Calu3 (cell line): ENCODE measurements at regions of chr19 and their contacts with region 1.

Region 1: GRCh38 chr19:48445606-48446481 is at the start of gene GRWD1:
- DNase-seq: peak; percentile 92
- H3K4me3 Mint-ChIP-seq: peak within 1 kb of the TSS; percentile 99
- H3K27ac Mint-ChIP-seq: peak within 1 kb of the TSS; percentile 97
- H3K4me1 Mint-ChIP-seq: peaks cover 16% of the 10 kb centered on the region
- H3K27me3 Mint-ChIP-seq: peaks cover 38% of the 10 kb centered on the region
- CTCF ChIP-seq: peak; percentile 6
- total RNA-seq, gene GRWD1: 75.0 and 76.7 TPM in 2 replicates

Region 2: DNA sequence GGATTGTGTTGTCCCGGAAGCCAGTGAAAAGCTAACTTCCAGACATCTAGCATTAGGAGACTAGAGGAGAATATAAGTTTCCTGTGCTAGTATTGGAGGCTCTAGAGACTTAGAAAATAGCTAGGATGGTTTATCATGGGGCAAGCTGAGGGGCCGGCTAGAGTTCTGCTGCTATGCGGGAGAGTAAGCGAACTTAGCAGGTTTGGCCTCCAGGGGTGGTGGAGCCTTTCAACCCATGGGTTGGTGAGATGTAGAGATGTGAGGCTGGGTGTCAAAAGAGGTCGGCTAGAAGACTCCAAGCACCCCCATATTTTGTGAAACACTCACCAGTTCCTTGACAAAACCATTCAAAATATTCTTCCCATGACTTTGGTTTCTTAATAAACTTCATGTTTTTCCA is 564.1 kb before region 1 on chr19:
- CTCF ChIA-PET with region 1: no interaction called
- intact Hi-C with region 1: no loop called
- DNase-seq: no peak
- H3K4me3 Mint-ChIP-seq: no peak overlapping the region
- H3K27ac Mint-ChIP-seq: no peak overlapping the region
- H3K4me1 Mint-ChIP-seq: peaks cover 11% of the 10 kb centered on the region
- H3K27me3 Mint-ChIP-seq: peaks cover 78% of the 10 kb centered on the region
- CTCF ChIP-seq: no peak

Region 3: DNA sequence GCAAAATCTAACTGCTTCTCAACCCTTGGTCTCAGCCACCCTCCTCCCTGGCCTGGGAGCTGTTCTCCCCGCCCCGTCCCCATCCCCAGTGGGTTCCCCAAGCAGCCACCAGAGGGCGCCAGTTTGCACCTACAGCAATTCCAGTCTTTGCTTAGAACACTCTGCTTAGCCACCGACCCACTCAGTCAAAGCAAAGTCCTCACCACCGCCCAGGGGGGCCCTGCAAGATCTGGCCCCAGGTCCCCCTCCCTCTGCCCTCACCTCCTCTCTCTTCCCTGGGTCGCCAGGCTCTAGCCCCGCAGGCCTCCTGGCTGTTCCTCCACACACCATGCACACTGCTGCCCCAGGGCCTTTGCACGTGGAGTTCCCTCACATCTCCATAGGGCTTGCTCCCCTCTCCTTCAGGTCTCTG is 94.5 kb before region 1 on chr19:
- CTCF ChIA-PET with region 1: no interaction called
- intact Hi-C with region 1: no loop called
- DNase-seq: peak; percentile 80
- H3K4me3 Mint-ChIP-seq: no peak overlapping the region
- H3K27ac Mint-ChIP-seq: no peak overlapping the region
- H3K4me1 Mint-ChIP-seq: peaks cover 15% of the 10 kb centered on the region
- H3K27me3 Mint-ChIP-seq: no peaks in the 10 kb centered on the region
- CTCF ChIP-seq: peak; percentile 76

Region 4: DNA sequence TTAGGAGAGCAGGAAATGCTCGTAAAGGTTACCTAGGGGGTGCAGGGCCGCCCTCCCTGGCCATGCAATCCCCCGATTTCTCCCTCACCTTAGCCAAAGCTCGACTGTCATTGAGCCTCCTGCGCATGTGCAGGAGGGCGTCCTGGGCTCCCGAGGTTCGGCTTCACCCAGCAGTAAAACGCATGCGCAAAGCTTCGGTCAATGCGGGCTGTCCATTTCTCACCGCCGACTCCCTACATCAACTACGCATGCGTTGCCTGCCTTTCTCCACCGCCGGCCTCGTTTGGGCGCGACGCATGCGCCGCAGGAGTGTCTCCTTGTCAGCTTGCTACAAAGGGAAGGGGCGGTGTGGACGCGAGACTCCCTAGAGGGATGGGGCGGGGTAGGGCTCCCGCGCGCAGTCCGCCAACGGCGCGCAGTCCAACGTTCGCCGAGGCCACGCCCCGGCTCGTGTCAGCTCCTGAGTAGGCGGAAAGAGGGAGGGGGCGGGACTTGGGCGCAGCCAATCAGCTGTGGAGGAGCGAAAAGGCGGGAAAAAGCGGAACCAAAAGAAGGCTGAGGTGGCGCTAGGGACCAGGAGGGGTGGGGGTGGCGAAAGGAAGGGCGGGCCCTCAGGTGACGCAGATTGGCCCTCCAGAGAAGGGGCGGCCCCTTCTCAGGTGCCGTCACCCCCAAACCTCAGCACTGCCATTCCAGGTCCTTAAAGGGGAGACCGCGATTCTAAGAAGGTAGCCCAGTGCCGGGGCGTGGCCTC is 81.9 kb before region 1 on chr19 and contains the starts of genes SYNGR4 and TMEM143:
- CTCF ChIA-PET with region 1: interaction called, 10 read pairs
- intact Hi-C with region 1: no loop called
- DNase-seq: peak; percentile 99
- H3K4me3 Mint-ChIP-seq: peak within 1 kb of the TSS; percentile 84
- H3K27ac Mint-ChIP-seq: peak within 1 kb of the TSS; percentile 97
- H3K4me1 Mint-ChIP-seq: no peaks in the 10 kb centered on the region
- H3K27me3 Mint-ChIP-seq: no peaks in the 10 kb centered on the region
- CTCF ChIP-seq: no peak
- total RNA-seq, gene SYNGR4: not detected in 2 replicates
- total RNA-seq, gene TMEM143: 10.4 and 14.8 TPM in 2 replicates

Region 5: DNA sequence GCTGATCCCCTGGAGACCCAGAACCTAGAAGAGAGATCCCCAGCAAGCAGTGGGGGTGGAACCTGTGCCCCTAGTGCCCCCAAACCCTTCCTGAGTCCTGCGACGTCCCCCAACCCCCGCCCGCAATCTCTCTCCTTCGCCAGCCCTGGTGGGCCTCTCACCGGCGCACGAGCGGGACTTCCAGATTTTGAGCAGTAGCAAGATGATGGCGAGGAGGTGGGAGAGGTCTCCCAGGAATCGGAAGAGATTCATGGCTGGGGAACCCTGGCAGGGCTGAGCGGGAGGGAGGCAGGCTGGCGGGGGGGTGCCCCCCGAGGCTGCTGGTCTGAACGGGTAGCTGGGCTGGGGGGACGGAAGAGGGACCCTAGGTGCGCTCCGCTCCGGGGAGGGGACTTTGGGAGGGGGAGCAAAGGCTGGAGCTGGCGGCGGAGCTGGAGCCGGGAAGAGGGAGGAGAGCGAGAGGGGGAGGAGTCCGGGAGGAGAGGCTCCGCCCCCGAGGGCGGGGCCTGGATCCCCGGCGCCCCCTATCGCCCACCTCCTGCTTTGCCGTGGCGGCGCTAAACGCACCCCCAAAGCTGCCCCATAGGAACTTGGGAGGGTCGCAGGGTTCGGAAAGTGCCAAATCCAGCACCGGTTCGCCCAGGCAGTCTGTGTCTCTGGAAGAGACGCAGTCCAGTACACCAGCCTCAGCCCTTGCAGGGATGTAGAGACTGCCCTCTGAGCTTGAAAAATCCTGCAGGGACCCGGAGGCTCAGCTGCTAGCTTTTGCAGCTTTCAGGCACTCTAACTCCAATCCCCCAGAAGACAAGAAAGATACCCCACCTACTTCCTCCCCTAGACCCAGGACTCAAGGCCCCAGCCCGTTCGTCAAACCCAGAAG is 54.5 kb before region 1 on chr19 and contains the start of gene KDELR1:
- CTCF ChIA-PET with region 1: interaction called, 27 read pairs
- intact Hi-C with region 1: loop called (anchors 1 kb)
- DNase-seq: peak; percentile 87
- H3K4me3 Mint-ChIP-seq: peak within 1 kb of the TSS; percentile 82
- H3K27ac Mint-ChIP-seq: peak within 1 kb of the TSS; percentile 89
- H3K4me1 Mint-ChIP-seq: peaks cover 9% of the 10 kb centered on the region
- H3K27me3 Mint-ChIP-seq: peaks cover 51% of the 10 kb centered on the region
- CTCF ChIP-seq: peak; percentile 95
- total RNA-seq, gene KDELR1: 185 and 194 TPM in 2 replicates

Region 6: GRCh38 chr19:48424694-48425219 is 21.1 kb before region 1 on chr19:
- CTCF ChIA-PET with region 1: interaction called, 11 read pairs
- intact Hi-C with region 1: no loop called
- DNase-seq: peak; percentile 67
- H3K4me3 Mint-ChIP-seq: peak overlapping the region; percentile 45
- H3K27ac Mint-ChIP-seq: peak overlapping the region; percentile 80
- H3K4me1 Mint-ChIP-seq: peaks cover 19% of the 10 kb centered on the region
- H3K27me3 Mint-ChIP-seq: no peaks in the 10 kb centered on the region
- CTCF ChIP-seq: no peak

Region 7: GRCh38 chr19:48489608-48490216 is 43.9 kb after region 1 on chr19:
- CTCF ChIA-PET with region 1: interaction called, 10 read pairs
- intact Hi-C with region 1: no loop called
- DNase-seq: peak; percentile 96
- H3K4me3 Mint-ChIP-seq: no peak overlapping the region
- H3K27ac Mint-ChIP-seq: no peak overlapping the region
- H3K4me1 Mint-ChIP-seq: peaks cover 42% of the 10 kb centered on the region
- H3K27me3 Mint-ChIP-seq: peaks cover 43% of the 10 kb centered on the region
- CTCF ChIP-seq: peak; percentile 91